ENCODE measurements at regions of chr11 and their contacts with region 1.

Region 1: DNA sequence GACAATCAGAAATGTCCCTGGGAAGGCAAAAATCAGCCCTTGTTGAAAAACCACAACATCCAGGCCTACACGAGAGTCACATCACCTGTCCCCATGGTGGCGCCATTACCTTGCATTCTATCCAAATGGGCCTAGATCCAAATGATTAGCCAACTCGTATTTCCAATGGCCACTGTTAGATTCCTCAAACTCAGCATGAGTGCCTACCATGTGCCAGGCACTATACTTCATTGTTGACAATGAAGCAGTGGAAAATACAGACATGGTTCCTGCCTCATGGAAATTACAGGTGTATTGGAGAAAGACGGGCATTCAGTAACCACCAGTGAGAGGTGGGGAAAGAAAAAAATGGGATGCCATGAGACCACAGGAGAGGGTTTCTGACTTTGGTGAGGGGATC is 29.8 kb upstream of the CREB3L1 start:
- DNase-seq: peak; percentile 61 to 72
- H3K4me3 ChIP-seq: no peak overlapping the region
- H3K27ac ChIP-seq: peak overlapping the region; percentile 78
- H3K4me1 ChIP-seq: peaks cover 26% of the 10 kb centered on the region
- H3K27me3 ChIP-seq: no peaks in the 10 kb centered on the region
- CTCF ChIP-seq: peak; percentile 75

Region 2: GRCh38 chr11:46278387-46279125 is 30.9 kb after region 1 on chr11:
- CTCF ChIA-PET with region 1: interaction called, 9 read pairs
- POLR2A ChIA-PET with region 1: no interaction called
- intact Hi-C with region 1: loop called (anchors 1 kb)
- DNase-seq: no peak
- H3K4me3 ChIP-seq: no peak overlapping the region
- H3K27ac ChIP-seq: no peak overlapping the region
- H3K4me1 ChIP-seq: peaks cover 22% of the 10 kb centered on the region
- H3K27me3 ChIP-seq: 0 out of 2 replicates have a peak, but pooled peaks cover 3% of the 10 kb centered on the region
- CTCF ChIP-seq: no peak

Region 3: GRCh38 chr11:46308631-46309419 is 61.2 kb after region 1 on chr11:
- CTCF ChIA-PET with region 1: interaction called, 15 read pairs
- POLR2A ChIA-PET with region 1: interaction called, 16 read pairs
- intact Hi-C with region 1: loop called (anchors 1 kb)
- DNase-seq: peak; percentile 54 to 74
- H3K4me3 ChIP-seq: no peak overlapping the region
- H3K27ac ChIP-seq: no peak overlapping the region
- H3K4me1 ChIP-seq: peaks cover 31% of the 10 kb centered on the region
- H3K27me3 ChIP-seq: no peaks in the 10 kb centered on the region
- CTCF ChIP-seq: peak; percentile 99

Region 4: DNA sequence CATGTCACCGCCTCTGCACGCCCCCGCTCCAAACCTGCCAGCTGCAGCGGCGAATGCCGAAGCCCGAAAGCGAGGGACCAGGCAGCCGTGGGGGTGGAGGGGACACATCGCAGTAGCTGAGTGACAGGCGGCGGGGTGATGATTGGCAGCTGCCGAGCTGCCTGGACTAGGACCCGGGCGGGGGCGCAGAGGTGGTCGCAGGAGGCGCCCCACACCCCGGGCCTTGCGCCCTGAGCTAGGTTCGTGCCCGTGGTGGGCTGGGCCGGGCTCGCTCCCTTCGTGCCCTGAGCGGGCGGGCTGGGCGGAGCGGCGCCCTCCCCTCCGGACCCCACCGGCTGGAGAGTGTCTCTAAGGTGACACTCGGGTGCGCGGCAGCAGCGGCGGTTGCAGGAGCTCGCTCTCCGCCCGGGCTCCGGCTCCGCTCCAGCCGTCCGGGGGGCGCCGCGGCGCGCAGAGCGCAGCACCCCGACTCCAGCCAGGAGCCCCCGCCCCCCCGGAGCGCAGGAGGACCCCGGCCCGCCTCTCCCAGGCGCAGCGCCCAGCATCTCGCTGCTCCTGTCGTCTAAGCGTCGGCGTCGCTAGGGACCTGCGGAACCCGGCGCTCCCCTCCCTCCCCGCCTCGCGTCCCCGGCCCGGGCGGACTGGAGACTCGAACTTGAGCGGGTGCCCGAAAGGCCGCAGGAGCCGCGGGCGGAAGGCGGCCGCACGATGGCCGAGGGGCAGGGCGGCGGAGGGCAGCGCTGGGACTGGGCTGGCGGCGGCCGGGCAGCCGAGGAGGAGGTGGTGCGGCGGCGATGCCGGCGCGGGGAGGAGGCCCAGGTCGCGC is 85.1 kb after region 1 on chr11:
- CTCF ChIA-PET with region 1: interaction called, 15 read pairs
- POLR2A ChIA-PET with region 1: no interaction called
- intact Hi-C with region 1: no loop called
- DNase-seq: no peak
- H3K4me3 ChIP-seq: no peak overlapping the region
- H3K27ac ChIP-seq: no peak overlapping the region
- H3K4me1 ChIP-seq: peaks cover 39% of the 10 kb centered on the region
- H3K27me3 ChIP-seq: no peaks in the 10 kb centered on the region
- CTCF ChIP-seq: no peak

Region 5: DNA sequence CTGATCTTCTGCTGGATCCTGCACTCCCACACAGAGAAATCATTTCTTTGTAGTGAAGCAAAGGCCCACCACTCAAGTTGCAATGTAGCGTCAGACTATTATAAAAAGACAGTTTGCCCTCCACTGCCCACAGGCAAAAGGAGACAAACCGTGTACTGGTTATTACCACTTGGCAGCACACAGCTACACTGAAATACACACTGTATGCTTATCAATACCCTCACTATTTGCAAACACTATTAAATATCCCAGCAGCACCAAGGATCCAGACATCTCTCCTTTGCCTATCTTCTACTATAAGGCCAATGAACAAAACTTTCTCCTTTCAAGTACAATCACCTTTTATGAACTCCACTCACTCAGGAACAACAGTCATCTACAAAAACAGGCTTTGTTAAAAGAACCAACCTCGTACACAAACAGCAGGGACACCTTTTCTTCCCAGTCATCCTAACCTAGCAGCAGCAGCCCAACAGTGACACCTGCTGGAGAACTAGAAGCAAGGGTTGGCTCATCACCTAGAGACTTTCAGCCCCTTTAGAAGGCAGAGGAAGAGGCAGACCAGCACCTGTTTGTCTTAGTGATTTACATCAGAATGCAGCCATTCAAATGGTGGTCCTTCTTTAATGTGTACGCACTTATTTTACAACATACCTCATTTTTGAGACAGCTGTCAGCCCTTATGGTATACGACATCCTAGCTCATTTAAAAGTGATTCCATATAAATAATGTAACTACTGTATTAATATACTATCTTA is 290.1 kb after region 1 on chr11:
- CTCF ChIA-PET with region 1: interaction called, 5 read pairs
- POLR2A ChIA-PET with region 1: interaction called, 4 read pairs
- intact Hi-C with region 1: loop called (anchors 5 kb)
- DNase-seq: peak; percentile 66 to 76
- H3K4me3 ChIP-seq: no peak overlapping the region
- H3K27ac ChIP-seq: 0 out of 2 replicates have a peak overlapping the region, but pooled peaks have one; percentile 5
- H3K4me1 ChIP-seq: peaks cover 8% of the 10 kb centered on the region; the same call in 1 of the 2 replicates
- H3K27me3 ChIP-seq: no peaks in the 10 kb centered on the region
- CTCF ChIP-seq: peak; percentile 97

Measured in PC-9 (cell line).